Natural killer cell (primary cell): ENCODE measurements at regions of chrX and their contacts with region 1.

Region 1: GRCh38 chrX:13658602-13659001 is 5.7 kb downstream of the TCEANC start:
- DNase-seq: peak in 1 of 2 donors; percentile 78
- ATAC-seq: peak; percentile 63 to 80 (median 64)
- H3K4me3 ChIP-seq: no peak overlapping the region
- H3K4me3 Mint-ChIP-seq: peak overlapping the region; percentile 35
- H3K27ac ChIP-seq: peak overlapping the region; percentile 57
- H3K27ac Mint-ChIP-seq: peak overlapping the region; percentile 82 to 83
- H3K4me1 ChIP-seq: peaks cover 5% of the 10 kb centered on the region
- H3K4me1 Mint-ChIP-seq: peaks cover 7 to 29% of the 10 kb centered on the region in 2 donors
- H3K27me3 ChIP-seq: no peaks in the 10 kb centered on the region
- H3K27me3 Mint-ChIP-seq: no peaks in the 10 kb centered on the region
- CTCF ChIP-seq: peak; percentile 48

Region 2: DNA sequence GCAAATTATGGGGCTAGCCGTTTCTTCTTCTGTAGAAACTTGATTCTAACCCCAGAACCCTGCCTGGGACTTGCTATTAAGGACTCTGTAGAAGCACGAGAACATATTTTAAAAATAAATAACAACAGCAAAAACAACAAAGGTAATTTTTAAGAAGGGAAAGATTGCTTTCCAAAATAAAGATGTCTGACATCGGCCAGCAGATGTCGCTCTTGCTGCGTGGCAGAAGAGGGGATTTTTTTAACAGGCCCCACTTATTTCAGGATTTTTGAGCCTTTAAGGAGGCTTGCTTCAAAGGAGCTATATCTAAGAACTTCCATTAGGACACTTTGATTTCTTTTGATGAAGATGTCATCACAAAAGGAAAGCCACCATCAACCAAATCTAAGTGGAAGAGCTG is 152.0 kb before region 1 on chrX:
- intact Hi-C with region 1: loop called (anchors 2 kb)
- DNase-seq: peak; percentile 19 to 76
- ATAC-seq: no peak
- H3K4me3 ChIP-seq: no peak overlapping the region
- H3K4me3 Mint-ChIP-seq: no peak overlapping the region
- H3K27ac ChIP-seq: no peak overlapping the region
- H3K27ac Mint-ChIP-seq: no peak overlapping the region
- H3K4me1 ChIP-seq: no peaks in the 10 kb centered on the region
- H3K4me1 Mint-ChIP-seq: no peaks in the 10 kb centered on the region
- H3K27me3 ChIP-seq: no peaks in the 10 kb centered on the region
- H3K27me3 Mint-ChIP-seq: peaks cover 0 to 23% of the 10 kb centered on the region in 2 donors
- CTCF ChIP-seq: peak; percentile 70

Region 3: GRCh38 chrX:13676885-13677284 is 18.3 kb after region 1 on chrX:
- intact Hi-C with region 1: no loop called
- DNase-seq: no peak
- ATAC-seq: no peak
- H3K4me3 ChIP-seq: no peak overlapping the region
- H3K4me3 Mint-ChIP-seq: no peak overlapping the region
- H3K27ac ChIP-seq: no peak overlapping the region
- H3K27ac Mint-ChIP-seq: no peak overlapping the region
- H3K4me1 ChIP-seq: no peaks in the 10 kb centered on the region
- H3K4me1 Mint-ChIP-seq: peaks cover 4 to 5% of the 10 kb centered on the region in 2 donors
- H3K27me3 ChIP-seq: no peaks in the 10 kb centered on the region
- H3K27me3 Mint-ChIP-seq: no peaks in the 10 kb centered on the region
- CTCF ChIP-seq: no peak

Region 4: DNA sequence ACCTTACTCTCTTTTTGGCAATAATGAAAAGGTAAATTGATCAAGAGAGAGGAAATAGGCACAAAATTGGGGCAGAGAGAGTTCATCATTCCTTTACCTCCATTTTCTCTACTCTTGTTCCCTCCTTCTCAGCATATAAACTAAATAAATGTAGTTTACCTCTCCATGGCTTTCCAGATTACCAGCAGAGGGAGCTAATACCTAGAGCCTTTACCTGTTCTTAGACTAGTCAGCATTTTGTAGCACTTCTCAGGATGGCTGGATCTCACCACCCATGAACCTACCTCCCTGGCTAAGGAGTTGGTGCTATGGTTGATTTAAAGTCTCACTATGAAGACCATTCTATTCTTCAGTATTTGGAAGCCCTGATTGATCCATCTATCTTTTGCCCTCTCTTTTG is 91.6 kb after region 1 on chrX:
- intact Hi-C with region 1: loop called (anchors 1 kb)
- DNase-seq: peak in 1 of 2 donors; percentile 63
- ATAC-seq: peak in 1 of 3 donors; percentile 60
- H3K4me3 ChIP-seq: no peak overlapping the region
- H3K4me3 Mint-ChIP-seq: no peak overlapping the region
- H3K27ac ChIP-seq: no peak overlapping the region
- H3K27ac Mint-ChIP-seq: peak overlapping the region; percentile 68 to 77
- H3K4me1 ChIP-seq: peaks cover 6% of the 10 kb centered on the region
- H3K4me1 Mint-ChIP-seq: peaks cover 19 to 36% of the 10 kb centered on the region in 2 donors
- H3K27me3 ChIP-seq: no peaks in the 10 kb centered on the region
- H3K27me3 Mint-ChIP-seq: no peaks in the 10 kb centered on the region
- CTCF ChIP-seq: no peak

Region 5: GRCh38 chrX:14095702-14096101 is 437.1 kb after region 1 on chrX:
- intact Hi-C with region 1: no loop called
- DNase-seq: peak in 1 of 2 donors; percentile 65
- ATAC-seq: peak; percentile 55 to 73 (median 57)
- H3K4me3 ChIP-seq: no peak overlapping the region
- H3K4me3 Mint-ChIP-seq: peak overlapping the region; percentile 17
- H3K27ac ChIP-seq: no peak overlapping the region
- H3K27ac Mint-ChIP-seq: no peak overlapping the region
- H3K4me1 ChIP-seq: peaks cover 2% of the 10 kb centered on the region
- H3K4me1 Mint-ChIP-seq: no peaks in the 10 kb centered on the region
- H3K27me3 ChIP-seq: no peaks in the 10 kb centered on the region
- H3K27me3 Mint-ChIP-seq: peaks cover 0 to 18% of the 10 kb centered on the region in 2 donors
- CTCF ChIP-seq: no peak